A549 (cell line): ENCODE measurements at regions of chr1 and their contacts with region 1.

Region 1: GRCh38 chr1:152533327-152533938 is 19.2 kb downstream of the CRCT1 start:
- DNase-seq: peak; percentile 33 to 76
- ATAC-seq: peak; percentile 81 to 92; a peak in 5 of 6 replicates
- H3K4me3 ChIP-seq: no peak overlapping the region
- H3K27ac ChIP-seq: no peak overlapping the region
- H3K4me1 ChIP-seq: no peaks in the 10 kb centered on the region
- CTCF ChIP-seq: peak; percentile 93
- EP300 ChIP-seq: no peak
- POLR2A ChIP-seq: no peak
- RAD21 ChIP-seq: peak; percentile 93 to 96

Region 2: DNA sequence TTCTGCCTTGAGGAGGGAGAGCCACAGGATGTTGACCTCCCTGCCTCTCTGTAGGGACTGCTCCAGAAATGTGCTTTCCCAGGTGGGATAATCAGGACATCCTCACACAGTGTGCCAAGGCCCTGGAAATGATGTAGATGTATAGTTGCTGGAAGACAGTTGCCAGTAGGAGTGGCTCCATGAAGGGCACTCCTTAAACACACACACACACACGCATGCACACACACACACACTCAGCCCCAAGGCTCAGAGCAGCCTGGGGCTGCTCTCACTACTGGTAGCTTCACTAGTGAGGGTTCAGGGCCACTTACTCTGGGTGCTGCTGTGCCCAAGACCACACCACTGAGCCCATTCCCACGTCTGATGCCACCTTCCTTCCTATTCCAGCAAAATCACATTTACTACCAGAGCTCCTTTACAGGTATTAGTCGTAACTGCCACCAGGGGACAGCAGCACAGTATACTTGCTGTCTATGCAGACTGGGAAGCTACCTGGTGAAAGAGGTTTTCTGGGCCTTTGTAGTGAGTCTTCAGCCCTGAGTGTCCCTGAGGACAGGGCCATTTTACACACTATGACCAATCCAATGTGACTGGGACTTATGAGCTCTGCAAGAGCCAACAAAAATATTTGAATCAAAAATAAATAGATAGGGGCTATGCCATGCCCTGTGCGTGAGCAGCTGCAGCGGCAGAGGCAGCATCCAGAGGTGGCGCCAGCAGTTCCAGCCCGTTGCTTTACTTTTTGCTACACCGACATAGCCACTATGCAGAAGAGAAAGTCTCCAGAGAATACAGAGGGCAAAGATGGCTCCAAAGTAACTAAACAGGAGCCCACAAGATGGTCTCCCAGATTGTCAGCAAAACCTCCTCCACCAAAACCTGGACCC is 134.4 kb before region 1 on chr1:
- CTCF ChIA-PET with region 1: interaction called, 21 read pairs
- POLR2A ChIA-PET with region 1: no interaction called
- DNase-seq: peak; percentile 44 to 66
- ATAC-seq: peak; percentile 98 to 99
- H3K4me3 ChIP-seq: no peak overlapping the region
- H3K27ac ChIP-seq: no peak overlapping the region
- H3K4me1 ChIP-seq: no peaks in the 10 kb centered on the region; the same call in 2 of the 3 replicates
- CTCF ChIP-seq: peak; percentile 61
- EP300 ChIP-seq: no peak
- POLR2A ChIP-seq: no peak
- RAD21 ChIP-seq: peak; percentile 52 to 63; a peak in 4 of 5 replicates

Region 3: GRCh38 chr1:152486400-152487006 is 46.9 kb before region 1 on chr1:
- CTCF ChIA-PET with region 1: interaction called, 15 read pairs
- POLR2A ChIA-PET with region 1: no interaction called
- DNase-seq: peak; percentile 30 to 44
- ATAC-seq: peak; percentile 68 to 81; a peak in 5 of 6 replicates
- H3K4me3 ChIP-seq: no peak overlapping the region
- H3K27ac ChIP-seq: no peak overlapping the region
- H3K4me1 ChIP-seq: no peaks in the 10 kb centered on the region
- CTCF ChIP-seq: peak; percentile 53
- EP300 ChIP-seq: no peak
- POLR2A ChIP-seq: no peak
- RAD21 ChIP-seq: peak; percentile 68 to 73

Region 4: GRCh38 chr1:152502496-152503180 is 30.8 kb before region 1 on chr1:
- CTCF ChIA-PET with region 1: interaction called, 75 read pairs
- POLR2A ChIA-PET with region 1: no interaction called
- DNase-seq: peak; percentile 43 to 84
- ATAC-seq: peak; percentile 71 to 78
- H3K4me3 ChIP-seq: no peak overlapping the region
- H3K27ac ChIP-seq: peak overlapping the region; percentile 90 to 92
- H3K4me1 ChIP-seq: peaks cover 67% of the 10 kb centered on the region
- CTCF ChIP-seq: no peak
- EP300 ChIP-seq: peak; percentile 16 to 63; a peak in 3 of 5 replicates
- POLR2A ChIP-seq: no peak
- RAD21 ChIP-seq: no peak

Region 5: GRCh38 chr1:152543820-152544219 is 10.4 kb after region 1 on chr1:
- CTCF ChIA-PET with region 1: interaction called, 11 read pairs
- POLR2A ChIA-PET with region 1: no interaction called
- DNase-seq: peak; percentile 37 to 39
- ATAC-seq: peak in 1 of 2 experiments; percentile 80; a peak in 3 of 6 replicates
- H3K4me3 ChIP-seq: no peak overlapping the region
- H3K27ac ChIP-seq: no peak overlapping the region
- H3K4me1 ChIP-seq: peaks cover 5% of the 10 kb centered on the region; the same call in 2 of the 3 replicates
- CTCF ChIP-seq: peak; percentile 21; the same call in 1 of the 3 replicates
- EP300 ChIP-seq: no peak
- POLR2A ChIP-seq: no peak
- RAD21 ChIP-seq: 0 out of 5 replicates have a peak, but pooled peaks of 1 of the 2 experiments have one; percentile 5